CD8-positive, alpha-beta T cell (primary cell): ENCODE measurements at regions of chr1 and their contacts with region 1.

Region 1: GRCh38 chr1:243255791-243256512 is at the start of gene SDCCAG8:
- DNase-seq: peak; percentile 85 to 98 (median 93)
- ATAC-seq: peak; percentile 75
- H3K4me3 ChIP-seq: peak within 1 kb of the TSS; percentile 77 to 86
- H3K4me3 Mint-ChIP-seq: peak within 1 kb of the TSS; percentile 96
- H3K27ac ChIP-seq: peak within 1 kb of the TSS; percentile 93 to 94
- H3K27ac Mint-ChIP-seq: peak within 1 kb of the TSS; percentile 99
- H3K4me1 ChIP-seq: peaks cover 26% of the 10 kb centered on the region
- H3K4me1 Mint-ChIP-seq: peaks cover 55% of the 10 kb centered on the region
- H3K27me3 ChIP-seq: no peaks in the 10 kb centered on the region
- H3K27me3 Mint-ChIP-seq: no peaks in the 10 kb centered on the region
- CTCF ChIP-seq: no peak
- total RNA-seq, gene SDCCAG8: 17.7 to 25.4 TPM

Region 2: DNA sequence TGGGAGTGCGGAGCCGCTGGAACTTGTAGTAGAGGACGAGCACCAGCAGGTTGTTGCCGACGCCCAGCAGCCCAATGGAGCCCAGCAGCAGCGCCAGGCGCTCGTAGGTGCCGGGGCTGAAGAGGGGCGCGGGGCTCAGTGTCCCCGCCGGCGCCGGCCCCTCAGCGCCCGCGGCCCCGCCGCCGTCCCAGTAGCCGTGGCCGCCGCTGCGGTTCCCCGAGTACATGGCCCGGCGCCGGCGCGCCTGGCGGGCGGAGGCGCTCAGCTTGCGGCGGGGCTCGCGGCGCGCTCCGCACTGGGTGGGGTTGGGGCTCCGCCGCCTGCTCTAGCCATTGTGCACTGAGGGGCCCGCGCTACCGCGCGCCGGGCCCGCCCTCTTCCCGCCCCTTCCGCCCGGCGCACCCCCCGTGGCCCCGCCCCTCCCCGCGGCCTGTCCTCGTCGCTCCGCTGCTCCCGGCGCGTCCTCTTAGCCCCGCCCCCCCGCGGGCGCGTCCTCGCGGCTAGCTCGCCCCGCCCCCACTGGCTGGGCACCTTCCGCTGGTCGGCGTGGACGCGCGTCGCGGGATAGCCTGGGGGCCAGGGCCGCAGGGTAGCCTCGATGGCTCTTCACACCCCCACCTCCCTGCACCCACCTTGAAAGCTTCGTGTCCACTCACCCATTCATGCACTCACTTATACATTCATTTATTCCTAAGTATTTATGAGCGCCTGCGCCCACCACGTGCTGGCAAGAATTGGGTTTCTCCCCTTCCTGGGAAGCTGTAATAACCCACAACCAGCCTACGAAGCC is 1615.7 kb before region 1 on chr1 and contains the starts of genes CHML and OPN3:
- CTCF ChIA-PET with region 1: no interaction called
- POLR2A ChIA-PET with region 1: no interaction called
- intact Hi-C with region 1: loop called (anchors 2 to 10 kb)
- DNase-seq: peak; percentile 82 to 95 (median 89)
- ATAC-seq: peak; percentile 96
- H3K4me3 ChIP-seq: peak within 1 kb of the TSS; percentile 90 to 95
- H3K4me3 Mint-ChIP-seq: peak within 1 kb of the TSS; percentile 82
- H3K27ac ChIP-seq: peak within 1 kb of the TSS; percentile 62 to 77
- H3K27ac Mint-ChIP-seq: peak within 1 kb of the TSS; percentile 92
- H3K4me1 ChIP-seq: peaks cover 32% of the 10 kb centered on the region
- H3K4me1 Mint-ChIP-seq: peaks cover 37% of the 10 kb centered on the region
- H3K27me3 ChIP-seq: no peaks in the 10 kb centered on the region
- H3K27me3 Mint-ChIP-seq: no peaks in the 10 kb centered on the region
- CTCF ChIP-seq: no peak
- total RNA-seq, gene CHML: 8.3 to 8.8 TPM
- total RNA-seq, gene OPN3: 1.2 to 1.4 TPM

Region 3: GRCh38 chr1:242567596-242567995 is 688.4 kb before region 1 on chr1:
- CTCF ChIA-PET with region 1: no interaction called
- POLR2A ChIA-PET with region 1: no interaction called
- intact Hi-C with region 1: no loop called
- DNase-seq: no peak
- ATAC-seq: no peak
- H3K4me3 ChIP-seq: no peak overlapping the region
- H3K4me3 Mint-ChIP-seq: no peak overlapping the region
- H3K27ac ChIP-seq: no peak overlapping the region
- H3K27ac Mint-ChIP-seq: no peak overlapping the region
- H3K4me1 ChIP-seq: no peaks in the 10 kb centered on the region
- H3K4me1 Mint-ChIP-seq: no peaks in the 10 kb centered on the region
- H3K27me3 ChIP-seq: no peaks in the 10 kb centered on the region
- H3K27me3 Mint-ChIP-seq: no peaks in the 10 kb centered on the region
- CTCF ChIP-seq: no peak

Region 4: DNA sequence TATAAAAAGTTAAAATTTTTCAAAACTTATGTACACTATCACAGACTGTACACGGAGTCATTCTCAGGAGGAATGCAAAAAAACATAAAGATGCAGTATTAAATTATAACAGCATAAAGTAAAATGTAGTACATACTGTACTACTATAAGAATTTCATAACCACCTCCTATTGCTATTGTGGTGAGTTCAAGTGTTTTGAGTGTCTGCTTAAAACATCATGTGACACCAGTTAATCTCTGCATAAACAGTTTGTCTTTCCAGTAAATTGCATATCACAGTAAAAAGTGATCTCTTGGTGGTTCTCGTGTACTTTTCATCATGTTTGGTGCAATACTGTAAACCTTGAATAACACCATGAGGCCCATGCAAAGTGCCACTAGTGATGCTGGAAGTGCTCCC is 45.1 kb after region 1 on chr1:
- CTCF ChIA-PET with region 1: no interaction called
- POLR2A ChIA-PET with region 1: no interaction called
- intact Hi-C with region 1: no loop called
- DNase-seq: no peak
- ATAC-seq: no peak
- H3K4me3 ChIP-seq: no peak overlapping the region
- H3K4me3 Mint-ChIP-seq: no peak overlapping the region
- H3K27ac ChIP-seq: no peak overlapping the region
- H3K27ac Mint-ChIP-seq: no peak overlapping the region
- H3K4me1 ChIP-seq: no peaks in the 10 kb centered on the region
- H3K4me1 Mint-ChIP-seq: no peaks in the 10 kb centered on the region
- H3K27me3 ChIP-seq: no peaks in the 10 kb centered on the region
- H3K27me3 Mint-ChIP-seq: no peaks in the 10 kb centered on the region
- CTCF ChIP-seq: no peak

Region 5: DNA sequence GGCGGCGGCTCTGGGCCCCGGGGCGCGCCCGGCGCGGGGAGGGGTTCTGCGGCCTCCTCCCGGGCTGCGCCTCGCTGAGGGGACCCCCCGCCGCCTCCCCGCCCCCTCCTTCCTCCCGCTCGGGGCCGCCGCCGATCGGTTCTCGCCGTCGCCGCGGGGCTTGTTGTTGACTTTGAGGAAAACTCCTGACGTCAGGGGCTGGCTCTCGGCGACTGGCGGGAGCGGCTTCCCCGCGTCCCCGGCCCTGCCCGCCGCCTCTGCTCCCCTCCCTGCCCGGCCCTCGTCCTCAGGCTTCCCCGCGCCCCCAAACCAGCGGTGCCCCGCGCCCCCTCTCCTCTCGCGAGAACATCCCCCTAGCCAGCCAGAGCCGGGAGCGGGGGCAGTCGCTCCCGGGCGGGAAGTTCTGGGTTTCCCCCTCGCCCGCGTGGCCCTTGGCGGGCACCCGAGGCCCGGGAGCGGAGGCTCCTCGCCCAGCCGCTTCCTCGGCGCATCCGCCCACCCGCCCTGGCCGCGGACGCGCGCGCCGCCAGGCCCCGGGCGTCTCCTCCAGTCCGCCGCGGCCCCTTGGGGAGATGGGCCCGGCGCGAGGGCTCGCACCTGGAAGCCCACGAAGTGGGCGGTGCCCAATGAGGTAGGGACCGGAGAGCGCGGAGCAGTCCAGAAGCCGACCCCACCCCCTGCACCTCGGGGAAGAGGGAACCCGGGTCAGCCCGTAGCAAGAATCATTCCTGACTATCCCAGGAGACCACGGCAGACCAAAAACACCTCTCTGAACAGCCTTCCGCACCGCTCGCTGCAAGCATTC is 594.7 kb after region 1 on chr1:
- CTCF ChIA-PET with region 1: no interaction called
- POLR2A ChIA-PET with region 1: no interaction called
- intact Hi-C with region 1: loop called (anchors 1 to 2 kb)
- DNase-seq: peak in 8 of 9 experiments; percentile 71 to 92 (median 84)
- ATAC-seq: peak; percentile 44
- H3K4me3 ChIP-seq: peak overlapping the region; percentile 53 to 66
- H3K4me3 Mint-ChIP-seq: peak overlapping the region; percentile 93
- H3K27ac ChIP-seq: peak overlapping the region; percentile 80 to 82
- H3K27ac Mint-ChIP-seq: peak overlapping the region; percentile 96
- H3K4me1 ChIP-seq: peaks cover 24% of the 10 kb centered on the region
- H3K4me1 Mint-ChIP-seq: peaks cover 38% of the 10 kb centered on the region
- H3K27me3 ChIP-seq: no peaks in the 10 kb centered on the region
- H3K27me3 Mint-ChIP-seq: peaks cover 2% of the 10 kb centered on the region
- CTCF ChIP-seq: no peak

Region 6: GRCh38 chr1:244074559-244075171 is 818.7 kb after region 1 on chr1:
- CTCF ChIA-PET with region 1: no interaction called
- POLR2A ChIA-PET with region 1: interaction called, 8 read pairs
- intact Hi-C with region 1: loop called in 1 of 2 experiments (anchors 10 kb)
- DNase-seq: peak; percentile 47 to 92 (median 74)
- ATAC-seq: peak; percentile 90
- H3K4me3 ChIP-seq: peak overlapping the region; percentile 38 to 41
- H3K4me3 Mint-ChIP-seq: peak overlapping the region; percentile 80
- H3K27ac ChIP-seq: peak overlapping the region; percentile 66 to 67
- H3K27ac Mint-ChIP-seq: peak overlapping the region; percentile 98
- H3K4me1 ChIP-seq: peaks cover 31% of the 10 kb centered on the region
- H3K4me1 Mint-ChIP-seq: peaks cover 45% of the 10 kb centered on the region
- H3K27me3 ChIP-seq: no peaks in the 10 kb centered on the region
- H3K27me3 Mint-ChIP-seq: no peaks in the 10 kb centered on the region
- CTCF ChIP-seq: no peak

Region 7: GRCh38 chr1:244451951-244452795 is 1196.2 kb after region 1 on chr1:
- CTCF ChIA-PET with region 1: no interaction called
- POLR2A ChIA-PET with region 1: interaction called, 8 read pairs
- intact Hi-C with region 1: loop called in 1 of 2 experiments (anchors 2 kb)
- DNase-seq: peak; percentile 97 to 100 (median 99)
- ATAC-seq: peak; percentile 83
- H3K4me3 ChIP-seq: peak overlapping the region; percentile 78 to 95
- H3K4me3 Mint-ChIP-seq: peak overlapping the region; percentile 91
- H3K27ac ChIP-seq: peak overlapping the region; percentile 95 to 96
- H3K27ac Mint-ChIP-seq: peak overlapping the region; percentile 97
- H3K4me1 ChIP-seq: peaks cover 32% of the 10 kb centered on the region
- H3K4me1 Mint-ChIP-seq: peaks cover 45% of the 10 kb centered on the region
- H3K27me3 ChIP-seq: no peaks in the 10 kb centered on the region
- H3K27me3 Mint-ChIP-seq: no peaks in the 10 kb centered on the region
- CTCF ChIP-seq: peak; percentile 55

Region 8: DNA sequence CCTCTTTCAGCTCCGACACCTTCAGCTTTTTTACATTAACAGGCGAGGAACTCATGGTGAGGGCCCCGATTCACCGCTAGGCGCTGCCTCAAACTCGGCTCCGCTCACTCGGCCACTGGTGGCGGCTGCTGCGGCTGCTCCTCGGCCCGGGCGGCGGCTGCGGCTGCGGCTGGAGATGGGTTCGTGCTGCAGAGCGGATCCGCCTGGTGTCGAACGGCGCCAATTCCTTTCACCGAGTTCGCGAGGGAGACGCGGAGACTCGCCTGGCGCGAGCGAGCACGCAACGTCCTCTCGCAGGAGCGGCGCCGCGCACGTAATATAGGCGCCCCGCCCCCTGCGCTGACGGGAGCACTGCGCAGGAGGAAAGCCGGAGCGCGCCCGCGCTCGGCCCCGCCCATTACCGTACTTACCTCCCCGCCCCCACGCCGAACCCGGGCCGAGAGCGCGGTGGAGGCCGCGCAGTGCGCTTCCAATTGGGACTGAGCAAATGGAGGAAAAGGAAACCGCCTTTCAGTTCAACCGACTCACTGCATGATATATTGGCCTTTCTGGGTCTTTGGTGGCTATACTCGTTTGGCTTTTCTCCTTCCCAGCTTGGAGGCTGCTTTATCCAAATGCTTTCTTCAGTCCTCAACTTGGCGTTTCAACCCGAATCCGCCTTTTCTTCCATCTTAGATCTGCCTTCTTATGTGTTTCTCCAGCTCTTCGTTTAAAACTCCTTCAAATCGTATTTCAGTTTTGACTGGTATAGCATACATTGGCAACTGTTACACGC is 1608.5 kb after region 1 on chr1 and contains the start of gene HNRNPU:
- CTCF ChIA-PET with region 1: no interaction called
- POLR2A ChIA-PET with region 1: no interaction called
- intact Hi-C with region 1: loop called in 1 of 2 experiments (anchors 5 kb)
- DNase-seq: peak; percentile 91 to 99 (median 96)
- ATAC-seq: peak; percentile 63
- H3K4me3 ChIP-seq: peak within 1 kb of the TSS; percentile 85 to 88
- H3K4me3 Mint-ChIP-seq: peak within 1 kb of the TSS; percentile 94
- H3K27ac ChIP-seq: peak within 1 kb of the TSS; percentile 91 to 94
- H3K27ac Mint-ChIP-seq: peak within 1 kb of the TSS; percentile 98
- H3K4me1 ChIP-seq: peaks cover 34% of the 10 kb centered on the region
- H3K4me1 Mint-ChIP-seq: peaks cover 45% of the 10 kb centered on the region
- H3K27me3 ChIP-seq: no peaks in the 10 kb centered on the region
- H3K27me3 Mint-ChIP-seq: no peaks in the 10 kb centered on the region
- CTCF ChIP-seq: no peak
- total RNA-seq, gene HNRNPU: 411 to 415 TPM